ENCODE measurements at regions of chr11 and their contacts with region 1.

Region 1: DNA sequence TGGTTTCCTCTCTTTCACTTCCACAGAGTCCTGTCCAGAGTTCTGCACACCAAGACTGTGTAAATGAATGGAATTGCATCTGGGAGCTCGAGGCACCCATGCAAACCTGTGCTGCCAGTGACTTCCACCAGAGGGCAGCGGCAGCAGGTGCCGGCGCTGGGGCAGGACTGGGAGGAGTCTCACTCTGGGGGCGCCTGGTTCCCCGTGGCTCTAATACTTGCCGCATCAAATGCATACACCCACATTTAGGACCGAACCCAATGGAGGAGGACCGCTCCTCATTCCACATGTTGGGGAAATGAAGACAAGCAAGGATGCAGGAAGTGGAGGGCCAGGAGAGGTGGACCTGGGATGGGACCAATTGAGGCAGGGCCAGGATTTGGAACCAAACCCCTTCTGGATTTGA is 1.1 kb upstream of the CD6 start:
- DNase-seq: peak; percentile 78 to 82 (median 80)
- H3K4me3 ChIP-seq: peak overlapping the region; percentile 38 to 92
- H3K4me3 Mint-ChIP-seq: peak overlapping the region; percentile 93 to 98 (median 96)
- H3K27ac ChIP-seq: peak overlapping the region; percentile 92
- H3K27ac Mint-ChIP-seq: peak overlapping the region; percentile 88 to 98 (median 96)
- H3K4me1 ChIP-seq: peaks cover 23% of the 10 kb centered on the region
- H3K4me1 Mint-ChIP-seq: peaks cover 18 to 38% (median 24%) of the 10 kb centered on the region in 4 donors
- H3K27me3 ChIP-seq: no peaks in the 10 kb centered on the region
- H3K27me3 Mint-ChIP-seq: peaks cover 0 to 1% of the 10 kb centered on the region in 2 donors

Region 2: DNA sequence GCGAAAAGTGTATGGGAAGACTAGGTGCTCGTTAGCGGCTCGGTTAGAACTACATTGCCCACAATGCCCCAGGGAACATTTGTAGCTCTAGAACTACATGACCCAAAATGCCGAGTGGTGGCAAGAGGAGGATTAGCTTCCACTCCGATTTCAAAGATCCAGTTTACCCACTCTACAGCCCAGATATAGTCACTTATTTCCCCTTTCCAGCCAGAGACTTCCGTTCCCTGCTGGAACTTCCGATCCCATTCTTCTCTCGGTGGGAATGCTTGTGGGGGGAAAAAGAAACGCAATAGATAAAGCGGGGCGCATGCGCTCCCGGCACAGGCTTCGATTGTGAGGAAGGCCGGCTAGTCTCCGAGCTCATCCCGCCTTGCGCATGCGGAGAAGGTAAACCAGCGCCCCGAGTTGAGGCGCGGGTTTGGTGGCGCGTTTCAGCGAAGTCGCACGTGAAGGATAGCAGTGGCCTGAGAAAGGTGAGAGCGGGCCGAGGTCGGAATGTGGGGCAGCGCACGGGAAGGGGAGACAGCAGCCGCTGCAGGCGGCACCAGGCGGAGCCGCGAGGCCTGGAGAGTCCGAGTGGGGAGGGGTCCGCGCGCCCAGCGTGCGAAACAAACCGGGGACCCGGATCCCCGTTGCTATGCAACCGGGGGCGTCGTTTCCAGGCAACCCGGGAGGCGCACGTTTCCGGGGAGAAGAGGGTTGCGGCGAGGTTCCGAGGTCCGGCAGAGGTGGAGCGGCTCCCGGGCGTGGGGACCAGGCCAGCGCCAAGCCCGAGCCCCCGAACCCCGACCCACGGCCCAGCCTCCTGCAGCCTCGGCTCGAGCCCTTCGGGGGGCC is 56.4 kb before region 1 on chr11 and contains the start of gene TMEM109:
- CTCF ChIA-PET with region 1: no interaction called
- POLR2A ChIA-PET with region 1: interaction called, 5 read pairs
- intact Hi-C with region 1: loop called (anchors 2 kb)
- DNase-seq: peak; percentile 90 to 92 (median 91)
- H3K4me3 ChIP-seq: peak within 1 kb of the TSS; percentile 79 to 96
- H3K4me3 Mint-ChIP-seq: peak within 1 kb of the TSS; percentile 92 to 100 (median 98)
- H3K27ac ChIP-seq: peak within 1 kb of the TSS; percentile 96
- H3K27ac Mint-ChIP-seq: peak within 1 kb of the TSS; percentile 87 to 99 (median 98)
- H3K4me1 ChIP-seq: peaks cover 47% of the 10 kb centered on the region
- H3K4me1 Mint-ChIP-seq: peaks cover 31 to 65% (median 44%) of the 10 kb centered on the region in 4 donors
- H3K27me3 ChIP-seq: no peaks in the 10 kb centered on the region
- H3K27me3 Mint-ChIP-seq: no peaks in the 10 kb centered on the region
- total RNA-seq, gene TMEM109: 66.9 to 68.0 TPM

Region 3: GRCh38 chr11:61004180-61004611 is 33.8 kb after region 1 on chr11:
- CTCF ChIA-PET with region 1: interaction called, 12 read pairs
- POLR2A ChIA-PET with region 1: no interaction called
- intact Hi-C with region 1: loop called (anchors 1 kb)
- DNase-seq: peak in 3 of 5 donors; percentile 47 to 76 (median 60)
- H3K4me3 ChIP-seq: peak overlapping the region; percentile 5 to 14
- H3K4me3 Mint-ChIP-seq: peak overlapping the region; percentile 63 to 87 (median 83)
- H3K27ac ChIP-seq: peak overlapping the region; percentile 54
- H3K27ac Mint-ChIP-seq: peak overlapping the region; percentile 89 to 97 (median 95)
- H3K4me1 ChIP-seq: peaks cover 93% of the 10 kb centered on the region
- H3K4me1 Mint-ChIP-seq: peaks cover 51 to 90% (median 66%) of the 10 kb centered on the region in 4 donors
- H3K27me3 ChIP-seq: no peaks in the 10 kb centered on the region
- H3K27me3 Mint-ChIP-seq: no peaks in the 10 kb centered on the region

Region 4: DNA sequence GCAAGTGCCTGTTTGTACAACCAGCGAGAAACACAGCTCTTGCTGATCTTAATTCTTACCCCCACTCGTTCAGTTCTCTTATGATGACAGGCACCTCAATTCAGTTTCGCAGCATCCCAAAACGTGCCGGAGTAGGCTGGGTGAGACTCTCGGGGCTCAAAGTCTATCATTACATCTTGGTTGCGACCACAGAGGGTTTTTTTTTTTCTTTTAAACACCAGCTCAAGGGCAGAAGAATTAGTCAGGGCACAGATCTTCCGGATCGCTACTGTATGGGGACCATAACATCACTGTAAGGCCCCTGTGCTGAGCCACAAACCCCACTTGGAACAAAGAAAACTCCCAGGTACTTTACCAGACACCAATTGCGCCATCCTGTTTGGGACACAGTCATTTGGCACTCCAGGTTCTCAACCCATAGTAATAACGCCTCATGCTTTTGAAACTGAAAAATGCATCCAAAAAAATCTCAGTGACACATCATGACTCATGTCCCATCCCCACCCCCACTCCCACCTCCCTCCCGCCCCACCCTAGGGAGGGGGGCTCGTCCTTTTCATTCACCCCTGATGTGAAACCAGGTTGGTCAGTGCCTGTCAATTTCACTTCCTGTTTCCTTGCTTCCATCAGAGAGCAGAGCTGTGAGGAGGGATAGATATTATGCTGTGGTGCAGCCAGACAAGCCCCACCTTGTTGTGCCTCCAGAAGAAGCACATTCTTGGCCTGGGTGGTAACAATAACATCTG is 90.9 kb after region 1 on chr11:
- CTCF ChIA-PET with region 1: interaction called, 16 read pairs
- POLR2A ChIA-PET with region 1: interaction called, 5 read pairs
- intact Hi-C with region 1: no loop called
- DNase-seq: peak; percentile 60 to 97 (median 65)
- H3K4me3 ChIP-seq: peak overlapping the region; percentile 17 to 48
- H3K4me3 Mint-ChIP-seq: peak overlapping the region; percentile 72 to 93 (median 86)
- H3K27ac ChIP-seq: peak overlapping the region; percentile 69
- H3K27ac Mint-ChIP-seq: peak overlapping the region; percentile 94 to 99 (median 97)
- H3K4me1 ChIP-seq: peaks cover 75% of the 10 kb centered on the region
- H3K4me1 Mint-ChIP-seq: peaks cover 59 to 91% (median 66%) of the 10 kb centered on the region in 4 donors
- H3K27me3 ChIP-seq: no peaks in the 10 kb centered on the region
- H3K27me3 Mint-ChIP-seq: no peaks in the 10 kb centered on the region